HAP-1 (cell line): ENCODE measurements at regions of chr2 and their contacts with region 1.

Region 1: DNA sequence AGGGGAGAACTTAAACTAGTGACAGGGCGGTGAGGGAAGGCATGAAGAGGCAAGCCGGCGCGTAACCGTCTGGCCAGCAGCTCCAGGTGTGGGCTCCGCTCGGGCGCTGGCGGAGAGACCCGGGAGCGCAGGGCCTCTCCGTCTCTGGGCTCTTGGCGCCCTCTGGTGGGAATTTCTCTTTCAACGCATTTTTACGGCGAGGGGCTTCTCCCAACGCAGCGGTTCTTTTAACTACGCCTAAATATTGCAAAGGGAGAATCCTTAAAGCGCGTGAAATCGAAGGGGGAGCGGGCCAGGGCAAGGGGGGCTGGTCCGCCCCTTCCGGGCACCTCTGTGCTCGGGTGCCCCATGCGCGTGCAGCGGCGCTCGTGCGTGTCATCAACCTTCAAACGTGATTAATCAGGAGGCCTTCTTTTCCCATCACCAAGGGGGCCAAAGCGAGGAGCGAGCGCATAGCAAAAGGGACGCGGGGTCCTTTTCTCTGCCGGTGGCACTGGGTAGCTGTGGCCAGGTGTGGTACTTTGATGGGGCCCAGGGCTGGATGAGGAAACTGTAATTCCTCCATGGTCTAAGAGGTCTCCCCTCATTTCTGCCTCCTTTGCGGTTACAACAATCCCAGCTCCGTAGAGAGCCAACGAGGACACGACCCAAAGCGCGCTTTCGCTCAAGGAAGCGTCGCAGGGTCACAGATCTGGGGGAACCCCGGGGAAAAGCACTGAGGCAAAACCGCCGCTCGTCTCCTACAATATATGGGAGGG is 762 bp upstream of the GAD1 start:
- DNase-seq: peak; percentile 68 to 90
- H3K4me3 ChIP-seq: peak overlapping the region; percentile 37
- H3K4me1 ChIP-seq: peaks cover 5% of the 10 kb centered on the region
- H3K27me3 ChIP-seq: peaks cover 29% of the 10 kb centered on the region

Region 2: DNA sequence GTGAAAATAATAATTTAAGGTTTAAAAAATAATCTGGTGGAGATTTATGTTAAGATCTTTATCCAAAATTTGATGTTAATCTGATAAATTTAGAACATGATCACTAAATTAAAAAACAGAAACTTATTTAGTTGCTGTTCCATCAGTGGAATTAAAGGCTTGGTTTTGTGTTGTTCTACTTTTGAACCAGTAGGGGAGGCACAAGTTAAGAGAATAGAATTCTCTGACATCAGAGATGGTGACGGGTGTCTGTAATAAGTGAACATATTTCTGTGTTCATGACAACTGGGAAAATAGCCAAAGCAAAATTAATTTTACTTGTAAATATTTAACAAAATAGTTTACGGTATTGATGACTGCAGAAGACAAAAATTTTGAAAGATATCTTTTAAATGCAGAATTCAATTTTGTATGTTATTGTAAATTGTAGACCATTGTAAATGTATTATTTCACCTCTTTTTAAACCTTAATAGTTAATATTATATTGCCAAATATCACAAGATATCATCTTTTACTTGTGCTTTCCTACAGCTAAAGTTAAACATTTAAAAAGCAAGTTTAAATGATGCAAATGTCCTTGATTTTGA is 882.7 kb before region 1 on chr2:
- in situ Hi-C with region 1: loop called (anchors 25 kb)
- DNase-seq: peak in 1 of 2 experiments; percentile 65
- H3K4me3 ChIP-seq: no peak overlapping the region
- H3K4me1 ChIP-seq: no peaks in the 10 kb centered on the region
- H3K27me3 ChIP-seq: no peaks in the 10 kb centered on the region

Region 3: DNA sequence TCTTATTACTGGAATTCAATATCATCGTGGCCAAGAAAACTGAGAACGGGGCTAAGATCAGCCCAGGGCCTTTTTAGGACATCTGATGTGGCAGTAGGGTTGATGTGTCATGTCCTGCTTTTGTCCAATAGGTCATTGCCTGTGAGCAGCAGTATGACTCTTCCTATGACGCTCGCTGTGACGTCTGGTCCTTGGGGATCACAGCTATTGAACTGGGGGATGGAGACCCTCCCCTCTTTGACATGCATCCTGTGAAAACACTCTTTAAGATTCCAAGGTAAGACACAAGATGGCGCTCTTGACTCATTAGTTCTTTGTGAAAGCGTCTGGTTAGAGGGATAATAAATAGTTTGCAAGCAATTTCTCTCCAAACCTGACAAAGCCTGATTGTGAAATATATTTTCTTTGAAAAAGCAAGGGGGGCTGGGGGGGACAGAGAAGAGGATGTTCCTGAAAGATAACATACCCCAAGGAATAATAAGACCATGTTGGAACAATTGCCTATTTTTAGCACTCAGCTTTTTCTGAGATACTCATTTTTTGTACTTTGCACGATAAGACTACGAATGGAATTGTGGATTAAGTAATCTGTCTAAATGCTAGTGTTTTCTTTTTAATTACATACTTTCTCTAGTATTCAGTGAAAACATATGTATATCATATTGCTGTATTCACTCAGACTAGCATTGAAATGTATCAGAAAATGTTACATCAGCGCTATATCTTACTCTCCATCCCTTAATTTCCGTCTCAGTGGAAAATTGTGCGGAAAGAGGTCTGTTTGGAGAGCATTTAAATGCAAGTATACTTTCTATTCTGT is 579.9 kb before region 1 on chr2:
- in situ Hi-C with region 1: loop called (anchors 5 kb)
- DNase-seq: peak; percentile 66 to 72
- H3K4me3 ChIP-seq: no peak overlapping the region
- H3K4me1 ChIP-seq: peaks cover 11% of the 10 kb centered on the region
- H3K27me3 ChIP-seq: peaks cover 6% of the 10 kb centered on the region; the same call in 1 of the 2 replicates

Region 4: DNA sequence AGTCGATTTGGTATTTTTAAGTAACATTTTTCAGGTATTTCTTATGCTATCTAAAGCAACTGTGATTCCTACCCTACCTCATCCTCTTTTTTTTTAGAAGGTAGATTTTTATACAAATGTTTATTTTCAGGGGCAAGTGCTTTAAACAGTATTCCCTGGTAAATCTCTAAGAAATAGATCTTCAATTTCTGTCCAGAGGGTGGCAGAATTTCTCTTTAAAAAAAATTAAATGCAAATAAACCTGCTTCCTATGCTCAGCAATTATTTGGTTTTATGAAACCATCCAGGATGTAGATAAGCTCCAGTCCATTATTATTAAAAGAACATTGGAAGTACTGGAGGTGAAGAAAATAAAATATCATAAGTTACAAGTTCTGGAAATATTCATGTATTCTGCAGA is 446.0 kb before region 1 on chr2:
- in situ Hi-C with region 1: loop called (anchors 5 kb)
- DNase-seq: peak in 1 of 2 experiments; percentile 44
- H3K4me3 ChIP-seq: no peak overlapping the region
- H3K4me1 ChIP-seq: peaks cover under 1% of the 10 kb centered on the region; the same call in 1 of the 2 replicates
- H3K27me3 ChIP-seq: peaks cover 42% of the 10 kb centered on the region

Region 5: DNA sequence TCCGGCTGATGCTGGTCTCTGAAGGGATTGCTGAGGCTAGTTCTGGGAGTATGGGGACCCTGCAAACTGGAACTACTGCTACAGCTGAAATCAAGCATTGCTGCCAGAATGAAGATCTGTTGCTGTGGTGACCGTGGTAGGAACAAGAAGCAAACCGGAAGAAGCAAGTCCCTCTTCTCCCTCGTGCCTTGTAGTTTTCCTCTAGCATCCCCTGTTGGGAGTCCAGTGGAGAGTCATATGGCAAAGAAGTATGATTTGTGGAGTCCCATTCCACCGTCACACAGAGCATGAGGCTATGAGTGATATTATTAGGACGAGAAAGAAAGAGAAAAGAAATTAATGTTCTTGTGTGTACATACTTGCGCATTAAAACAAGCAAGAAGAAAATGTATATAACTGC is 239.6 kb before region 1 on chr2:
- in situ Hi-C with region 1: no loop called
- DNase-seq: no peak
- H3K4me3 ChIP-seq: no peak overlapping the region
- H3K4me1 ChIP-seq: no peaks in the 10 kb centered on the region
- H3K27me3 ChIP-seq: no peaks in the 10 kb centered on the region